Caco-2 (cell line): ENCODE measurements at regions of chr15 and their contacts with region 1.

Region 1: DNA sequence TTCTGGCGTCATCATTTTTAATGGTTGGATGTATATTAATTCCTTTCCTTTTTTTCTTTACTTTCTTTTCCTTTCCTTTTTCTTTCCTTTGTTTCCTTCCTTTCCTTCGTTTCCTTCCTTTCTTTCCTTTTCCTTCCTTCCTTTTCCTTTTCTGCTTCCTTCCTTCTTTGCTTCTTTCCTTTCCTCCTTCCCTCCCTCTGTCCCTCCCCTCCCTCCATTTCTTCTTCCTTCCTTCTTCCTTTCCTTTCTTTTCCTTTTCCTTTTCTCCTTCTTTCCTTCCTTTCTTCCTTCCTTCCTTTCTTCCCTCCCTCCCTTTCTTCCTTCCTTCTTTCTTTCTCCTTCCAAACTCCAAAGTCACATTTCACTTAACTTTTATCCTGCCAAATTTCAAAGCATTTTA is 54.9 kb upstream of the LYSMD4 start:
- DNase-seq: no peak
- H3K4me3 ChIP-seq: no peak overlapping the region
- H3K4me3 Mint-ChIP-seq: no peak overlapping the region
- H3K27ac Mint-ChIP-seq: no peak overlapping the region
- H3K4me1 ChIP-seq: peaks cover 5% of the 10 kb centered on the region; the same call in 1 of the 2 replicates
- H3K4me1 Mint-ChIP-seq: no peaks in the 10 kb centered on the region
- H3K27me3 ChIP-seq: no peaks in the 10 kb centered on the region
- H3K27me3 Mint-ChIP-seq: no peaks in the 10 kb centered on the region
- CTCF ChIP-seq: no peak

Region 2: GRCh38 chr15:99536422-99537040 is 251.7 kb before region 1 on chr15:
- CTCF ChIA-PET with region 1: no interaction called
- POLR2A ChIA-PET with region 1: no interaction called
- intact Hi-C with region 1: no loop called
- DNase-seq: no peak
- H3K4me3 ChIP-seq: no peak overlapping the region
- H3K4me3 Mint-ChIP-seq: no peak overlapping the region
- H3K27ac Mint-ChIP-seq: no peak overlapping the region
- H3K4me1 ChIP-seq: no peaks in the 10 kb centered on the region
- H3K4me1 Mint-ChIP-seq: no peaks in the 10 kb centered on the region
- H3K27me3 ChIP-seq: no peaks in the 10 kb centered on the region
- H3K27me3 Mint-ChIP-seq: no peaks in the 10 kb centered on the region
- CTCF ChIP-seq: no peak

Region 3: DNA sequence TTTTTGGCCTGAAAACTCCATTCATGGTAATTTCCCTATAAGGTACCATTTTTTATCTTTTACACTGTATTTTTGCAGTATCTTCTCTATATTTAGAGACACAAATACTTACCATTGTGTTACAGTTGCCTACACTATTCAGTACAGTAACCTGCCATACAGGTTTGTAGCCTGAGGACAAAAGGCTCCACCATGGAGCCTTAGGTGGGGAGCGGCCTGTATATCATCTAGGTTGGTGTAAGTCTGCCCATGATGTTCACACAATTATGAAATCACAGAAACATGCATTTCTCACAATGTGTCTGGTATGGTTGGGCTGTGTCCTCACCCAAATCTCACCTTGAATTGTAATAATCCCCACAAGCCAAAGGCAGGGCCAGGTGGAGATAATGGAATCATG is 11.0 kb before region 1 on chr15:
- CTCF ChIA-PET with region 1: no interaction called
- POLR2A ChIA-PET with region 1: no interaction called
- intact Hi-C with region 1: no loop called
- DNase-seq: no peak
- H3K4me3 ChIP-seq: no peak overlapping the region
- H3K4me3 Mint-ChIP-seq: no peak overlapping the region
- H3K27ac Mint-ChIP-seq: no peak overlapping the region
- H3K4me1 ChIP-seq: no peaks in the 10 kb centered on the region
- H3K4me1 Mint-ChIP-seq: peaks cover 11% of the 10 kb centered on the region
- H3K27me3 ChIP-seq: no peaks in the 10 kb centered on the region
- H3K27me3 Mint-ChIP-seq: no peaks in the 10 kb centered on the region
- CTCF ChIP-seq: no peak

Region 4: DNA sequence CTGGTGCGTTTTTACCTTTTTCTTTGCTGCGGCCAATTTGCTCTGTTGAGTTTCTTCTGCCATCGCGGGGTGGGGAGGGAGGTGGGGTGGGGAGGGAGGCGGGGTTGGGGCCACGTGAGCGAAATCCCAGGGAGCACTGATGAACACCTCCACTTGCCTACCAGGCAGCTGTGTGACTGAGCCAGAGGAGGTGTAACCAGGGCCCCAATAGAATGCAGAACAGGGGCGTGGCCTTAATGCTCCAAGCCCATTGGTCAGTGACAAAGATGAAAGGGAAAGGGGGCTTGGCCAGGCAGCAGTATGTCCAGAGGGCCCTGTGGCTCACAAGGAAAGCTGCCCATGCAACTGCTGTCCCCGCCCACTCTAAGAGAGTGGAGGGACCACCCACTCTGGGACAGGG is 1993.7 kb after region 1 on chr15:
- CTCF ChIA-PET with region 1: no interaction called
- POLR2A ChIA-PET with region 1: no interaction called
- intact Hi-C with region 1: loop called (anchors 10 kb)
- DNase-seq: no peak
- H3K4me3 ChIP-seq: no peak overlapping the region
- H3K4me3 Mint-ChIP-seq: no peak overlapping the region
- H3K27ac Mint-ChIP-seq: no peak overlapping the region
- H3K4me1 ChIP-seq: no peaks in the 10 kb centered on the region
- H3K4me1 Mint-ChIP-seq: no peaks in the 10 kb centered on the region
- H3K27me3 ChIP-seq: no peaks in the 10 kb centered on the region
- H3K27me3 Mint-ChIP-seq: peaks cover 2% of the 10 kb centered on the region
- CTCF ChIP-seq: no peak